Colonic mucosa (tissue), 4 donors: ENCODE measurements at regions of chr15 and their contacts with region 1.

Region 1: DNA sequence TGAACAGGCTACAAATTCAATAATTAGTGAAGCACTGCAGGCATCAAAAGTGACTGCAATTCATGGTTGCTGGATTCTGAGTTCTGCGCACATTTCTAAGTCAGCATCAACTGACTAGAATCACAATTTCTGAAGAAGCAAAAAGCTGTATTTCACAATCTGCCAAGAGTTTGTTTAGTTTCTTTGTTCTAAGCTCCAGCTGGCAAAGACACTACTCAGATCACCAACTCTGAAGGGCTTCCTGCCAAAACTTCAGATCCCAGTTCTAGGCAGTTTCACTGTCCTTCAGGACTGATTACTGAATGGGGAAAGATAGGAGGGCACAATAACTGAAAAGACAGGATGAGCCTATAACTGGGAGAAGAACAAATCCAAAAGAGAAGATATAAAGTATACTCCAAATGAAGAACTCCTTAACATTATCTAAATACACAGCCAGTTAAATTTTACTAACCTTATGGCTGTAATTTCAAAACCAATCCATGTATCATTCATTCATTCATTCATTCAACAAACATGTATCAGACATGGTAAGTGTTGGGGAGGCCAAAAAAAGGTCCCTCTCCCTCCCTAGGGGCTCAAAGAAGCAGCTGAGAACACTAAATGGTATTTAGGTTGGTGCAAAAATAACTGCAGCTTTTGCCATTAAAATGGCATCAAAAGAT is 17.1 kb downstream of the TJP1 start:
- DNase-seq: peak; percentile 32
- H3K4me3 ChIP-seq: no peak overlapping the region
- H3K27ac ChIP-seq: no peak overlapping the region
- H3K4me1 ChIP-seq: no peaks in the 10 kb centered on the region
- H3K27me3 ChIP-seq: no peaks in the 10 kb centered on the region
- CTCF ChIP-seq: no peak

Region 2: GRCh38 chr15:29747837-29748417 is 57.2 kb before region 1 on chr15:
- intact Hi-C with region 1: loop called (anchors 10 kb)
- DNase-seq: no peak
- H3K4me3 ChIP-seq: no peak overlapping the region
- H3K27ac ChIP-seq: no peak overlapping the region
- H3K4me1 ChIP-seq: no peaks in the 10 kb centered on the region
- H3K27me3 ChIP-seq: no peaks in the 10 kb centered on the region
- CTCF ChIP-seq: no peak

Region 3: GRCh38 chr15:29759596-29759995 is 45.6 kb before region 1 on chr15:
- intact Hi-C with region 1: no loop called
- DNase-seq: no peak
- H3K4me3 ChIP-seq: no peak overlapping the region
- H3K27ac ChIP-seq: no peak overlapping the region
- H3K4me1 ChIP-seq: no peaks in the 10 kb centered on the region
- H3K27me3 ChIP-seq: no peaks in the 10 kb centered on the region
- CTCF ChIP-seq: no peak

Region 4: GRCh38 chr15:29924750-29925149 is 119.6 kb after region 1 on chr15:
- intact Hi-C with region 1: loop called (anchors 5 kb)
- DNase-seq: no peak
- H3K4me3 ChIP-seq: no peak overlapping the region
- H3K27ac ChIP-seq: peak overlapping the region; percentile 67
- H3K4me1 ChIP-seq: peaks cover 8% of the 10 kb centered on the region
- H3K27me3 ChIP-seq: no peaks in the 10 kb centered on the region
- CTCF ChIP-seq: no peak